CD8-positive, alpha-beta memory T cell (primary cell): ENCODE measurements at regions of chr16 and their contacts with region 1.

Region 1: DNA sequence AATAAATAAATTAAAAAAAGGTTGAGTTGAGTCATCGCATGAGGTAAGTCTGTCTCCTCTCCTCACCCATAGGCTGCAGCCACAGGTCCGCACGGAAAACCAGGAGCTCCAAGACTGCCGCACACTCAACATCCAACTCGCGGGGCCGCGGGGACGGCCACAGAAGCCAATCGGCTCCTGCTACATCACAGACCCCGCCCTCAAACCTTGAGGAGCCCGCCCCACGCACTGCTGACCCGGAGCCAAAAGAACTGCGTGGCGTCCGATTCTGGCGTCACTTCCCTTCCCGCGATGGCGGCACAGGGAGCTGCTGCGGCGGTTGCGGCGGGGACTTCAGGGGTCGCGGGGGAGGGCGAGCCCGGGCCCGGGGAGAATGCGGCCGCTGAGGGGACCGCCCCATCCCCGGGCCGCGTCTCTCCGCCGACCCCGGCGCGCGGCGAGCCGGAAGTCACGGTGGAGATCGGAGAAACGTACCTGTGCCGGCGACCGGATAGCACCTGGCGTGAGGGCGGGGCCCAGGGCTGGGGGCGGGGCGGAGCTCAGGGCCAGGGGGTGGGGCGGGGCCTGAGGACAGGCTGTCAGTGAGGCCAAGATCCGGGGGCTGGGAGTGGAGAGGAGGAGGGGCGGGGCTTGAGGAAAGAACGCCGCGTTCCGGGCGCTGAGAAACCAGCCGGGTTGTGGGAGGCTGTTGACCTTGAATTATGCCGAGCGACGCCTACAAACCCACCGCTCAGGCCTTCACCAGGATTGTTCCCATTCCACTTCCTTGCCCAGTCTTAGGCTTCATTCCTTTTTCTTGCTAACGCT is at the start of gene KAT8:
- DNase-seq: peak; percentile 96 to 98 (median 97)
- H3K4me3 ChIP-seq: peak within 1 kb of the TSS; percentile 90
- H3K4me3 Mint-ChIP-seq: peak within 1 kb of the TSS; percentile 83 to 95 (median 89)
- H3K27ac ChIP-seq: peak within 1 kb of the TSS; percentile 90
- H3K27ac Mint-ChIP-seq: peak within 1 kb of the TSS; percentile 76 to 99 (median 96)
- H3K4me1 ChIP-seq: peaks cover 12% of the 10 kb centered on the region
- H3K4me1 Mint-ChIP-seq: peaks cover 13 to 18% (median 16%) of the 10 kb centered on the region in 3 donors
- H3K27me3 ChIP-seq: no peaks in the 10 kb centered on the region
- H3K27me3 Mint-ChIP-seq: no peaks in the 10 kb centered on the region
- total RNA-seq, gene KAT8: 56.1 to 58.6 TPM

Region 2: DNA sequence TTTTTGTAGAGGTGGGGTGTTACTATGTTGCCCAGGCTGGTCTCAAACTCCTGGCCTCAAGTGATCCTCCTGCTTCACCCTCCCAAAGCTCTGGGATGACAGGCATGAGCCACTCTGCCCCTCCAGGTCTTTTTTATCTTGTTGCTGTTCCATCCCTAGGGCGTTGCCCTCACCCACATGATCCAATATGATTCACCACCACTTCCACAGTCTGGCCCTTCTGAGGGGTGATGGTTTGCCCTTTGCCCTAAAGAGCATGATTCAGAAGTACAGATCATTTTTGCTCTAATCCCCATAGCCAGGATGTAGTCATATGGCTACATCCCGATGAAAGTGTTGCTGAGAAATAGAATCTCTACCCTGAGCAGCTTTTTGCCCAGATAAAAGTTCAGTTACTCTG is 65.5 kb before region 1 on chr16:
- CTCF ChIA-PET with region 1: no interaction called
- POLR2A ChIA-PET with region 1: no interaction called
- DNase-seq: no peak
- H3K4me3 ChIP-seq: no peak overlapping the region
- H3K4me3 Mint-ChIP-seq: no peak overlapping the region
- H3K27ac ChIP-seq: no peak overlapping the region
- H3K27ac Mint-ChIP-seq: peak overlapping the region in 2 of 8 donors; percentile 19 to 30
- H3K4me1 ChIP-seq: no peaks in the 10 kb centered on the region
- H3K4me1 Mint-ChIP-seq: peaks cover 0 to 3% (median 1%) of the 10 kb centered on the region in 3 donors
- H3K27me3 ChIP-seq: no peaks in the 10 kb centered on the region
- H3K27me3 Mint-ChIP-seq: peaks cover 0 to 3% of the 10 kb centered on the region in 2 donors

Region 3: GRCh38 chr16:31073968-31074813 is 43.4 kb before region 1 on chr16 and contains the starts of genes ZNF646 and ZNF668:
- CTCF ChIA-PET with region 1: interaction called, 9 read pairs
- POLR2A ChIA-PET with region 1: interaction called, 37 read pairs
- DNase-seq: peak; percentile 96 to 99 (median 97)
- H3K4me3 ChIP-seq: peak within 1 kb of the TSS; percentile 100
- H3K4me3 Mint-ChIP-seq: peak within 1 kb of the TSS; percentile 87 to 97 (median 97)
- H3K27ac ChIP-seq: peak within 1 kb of the TSS; percentile 89
- H3K27ac Mint-ChIP-seq: peak within 1 kb of the TSS; percentile 89 to 100 (median 98)
- H3K4me1 ChIP-seq: peaks cover 24% of the 10 kb centered on the region
- H3K4me1 Mint-ChIP-seq: peaks cover 37 to 55% (median 41%) of the 10 kb centered on the region in 3 donors
- H3K27me3 ChIP-seq: no peaks in the 10 kb centered on the region
- H3K27me3 Mint-ChIP-seq: peaks cover 0 to 3% of the 10 kb centered on the region in 2 donors
- total RNA-seq, gene ZNF646: 23.4 to 25.9 TPM
- total RNA-seq, gene ZNF668: 15.9 to 20.5 TPM

Region 4: DNA sequence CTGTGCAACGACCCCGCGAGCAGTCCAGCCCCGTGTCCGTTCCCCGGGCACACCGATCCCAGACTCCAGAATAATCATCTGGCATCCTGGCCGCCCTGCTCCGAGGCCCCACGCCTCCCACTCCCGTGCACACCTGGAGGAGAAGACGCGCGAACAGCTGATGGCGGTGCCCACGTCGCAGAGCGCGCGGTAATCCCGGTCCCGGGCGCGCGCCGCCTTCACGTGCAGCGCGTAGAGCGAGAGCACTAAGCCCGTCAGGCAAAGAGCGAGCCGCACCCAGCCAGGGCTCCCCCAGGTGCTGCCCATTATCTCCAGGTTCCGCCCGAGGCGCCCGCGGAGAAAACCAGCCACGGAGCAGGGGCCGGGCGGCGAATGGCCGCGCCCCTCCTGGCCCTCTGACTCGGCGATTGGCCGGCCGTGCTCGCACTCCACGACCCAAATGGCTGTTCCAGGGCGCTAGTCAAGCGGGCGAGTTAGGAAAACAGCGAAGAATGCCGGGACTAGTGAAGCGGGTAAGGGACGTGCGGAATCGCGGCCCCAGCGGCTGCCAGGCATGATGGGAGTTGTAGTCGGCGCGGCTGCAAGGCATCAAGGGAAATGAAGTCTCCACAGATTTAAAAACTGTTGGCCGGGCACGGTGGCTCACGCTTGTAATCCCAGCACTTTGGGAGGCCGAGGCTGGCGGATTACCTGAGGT is 23.0 kb before region 1 on chr16 and contains the start of gene VKORC1:
- CTCF ChIA-PET with region 1: no interaction called
- POLR2A ChIA-PET with region 1: interaction called, 13 read pairs
- DNase-seq: peak; percentile 74 to 89 (median 82)
- H3K4me3 ChIP-seq: peak within 1 kb of the TSS; percentile 98
- H3K4me3 Mint-ChIP-seq: peak within 1 kb of the TSS; percentile 73 to 97 (median 90)
- H3K27ac ChIP-seq: peak within 1 kb of the TSS; percentile 75
- H3K27ac Mint-ChIP-seq: peak within 1 kb of the TSS; percentile 68 to 97 (median 90)
- H3K4me1 ChIP-seq: peaks cover 16% of the 10 kb centered on the region
- H3K4me1 Mint-ChIP-seq: peaks cover 24 to 38% (median 30%) of the 10 kb centered on the region in 3 donors
- H3K27me3 ChIP-seq: no peaks in the 10 kb centered on the region
- H3K27me3 Mint-ChIP-seq: no peaks in the 10 kb centered on the region
- total RNA-seq, gene VKORC1: 66.0 to 74.3 TPM